GM12878 (cell line): ENCODE measurements at regions of chr6 and their contacts with region 1.

Region 1: DNA sequence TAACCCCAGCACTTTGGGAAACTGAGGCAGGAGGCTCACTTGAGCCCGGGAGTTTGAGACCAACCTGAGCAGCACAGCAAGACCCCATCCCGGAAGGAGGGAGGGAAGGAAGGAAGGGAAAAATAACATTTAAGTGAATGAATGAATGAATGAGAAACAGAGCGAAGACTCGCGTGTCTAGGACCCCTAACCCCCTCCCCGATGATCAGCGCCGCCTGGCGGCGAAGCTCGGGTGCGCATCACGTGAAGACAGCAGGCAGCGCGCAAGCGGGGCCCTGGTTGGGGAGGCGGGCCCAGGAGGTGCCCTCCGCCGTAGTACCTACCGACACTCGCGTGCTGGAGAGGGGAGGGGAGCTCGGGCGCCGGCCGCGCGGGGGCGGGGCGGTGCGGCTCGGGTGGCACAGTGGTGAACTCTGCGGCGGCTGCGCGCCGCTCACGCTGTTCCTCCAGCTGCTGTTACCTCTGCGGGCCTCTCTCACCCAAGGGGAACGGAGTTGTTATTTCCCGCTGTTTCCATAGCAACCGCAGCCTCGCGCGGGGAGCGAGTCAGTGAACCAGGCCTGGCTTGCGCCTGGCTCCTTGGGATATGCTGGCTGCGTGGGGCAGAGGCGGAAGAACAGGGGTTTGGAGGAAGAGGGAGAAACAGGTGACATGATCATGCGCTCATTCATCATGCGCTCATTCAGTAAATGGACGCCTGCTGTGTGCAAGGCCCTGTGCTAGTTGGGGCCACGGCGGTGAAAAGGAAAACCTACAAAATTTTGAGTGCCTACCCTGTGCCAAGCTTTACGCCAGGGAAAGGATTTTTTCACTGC is 2.0 kb upstream of the DCDC2 start:
- DNase-seq: peak; percentile 28
- ATAC-seq: peak; percentile 97
- H3K4me3 ChIP-seq: peak overlapping the region; percentile 17; the same call in 1 of the 2 replicates
- H3K27ac ChIP-seq: no peak overlapping the region
- H3K4me1 ChIP-seq: no peaks in the 10 kb centered on the region; the same call in 1 of the 2 replicates
- H3K27me3 ChIP-seq: peaks cover 0 to 2% of the 10 kb centered on the region in 2 experiments; a peak in 1 of 4 replicates
- CTCF ChIP-seq: peak; percentile 56 to 91 (median 85)
- EP300 ChIP-seq: no peak; a peak in 1 of 4 replicates
- POLR2A ChIP-seq: no peak
- RAD21 ChIP-seq: peak; percentile 49; the same call in 1 of the 2 replicates

Region 2: GRCh38 chr6:24009319-24009718 is 350.5 kb before region 1 on chr6:
- CTCF ChIA-PET with region 1: no interaction called
- POLR2A ChIA-PET with region 1: no interaction called
- RAD21 ChIA-PET with region 1: no interaction called
- SMC1A ChIA-PET with region 1: no interaction called
- in situ Hi-C with region 1: no loop called
- intact Hi-C with region 1: no loop called
- DNase-seq: no peak
- ATAC-seq: no peak
- H3K4me3 ChIP-seq: no peak overlapping the region
- H3K27ac ChIP-seq: no peak overlapping the region
- H3K4me1 ChIP-seq: no peaks in the 10 kb centered on the region
- H3K27me3 ChIP-seq: no peaks in the 10 kb centered on the region
- CTCF ChIP-seq: no peak
- EP300 ChIP-seq: no peak
- POLR2A ChIP-seq: no peak
- RAD21 ChIP-seq: no peak

Region 3: GRCh38 chr6:24069526-24069925 is 290.3 kb before region 1 on chr6:
- CTCF ChIA-PET with region 1: interaction called, 3 read pairs
- POLR2A ChIA-PET with region 1: no interaction called
- RAD21 ChIA-PET with region 1: no interaction called
- SMC1A ChIA-PET with region 1: no interaction called
- in situ Hi-C with region 1: no loop called
- intact Hi-C with region 1: loop called (anchors 5 kb)
- DNase-seq: no peak
- ATAC-seq: no peak
- H3K4me3 ChIP-seq: no peak overlapping the region
- H3K27ac ChIP-seq: no peak overlapping the region
- H3K4me1 ChIP-seq: no peaks in the 10 kb centered on the region
- H3K27me3 ChIP-seq: no peaks in the 10 kb centered on the region
- CTCF ChIP-seq: no peak
- EP300 ChIP-seq: no peak
- POLR2A ChIP-seq: no peak
- RAD21 ChIP-seq: no peak

Region 4: DNA sequence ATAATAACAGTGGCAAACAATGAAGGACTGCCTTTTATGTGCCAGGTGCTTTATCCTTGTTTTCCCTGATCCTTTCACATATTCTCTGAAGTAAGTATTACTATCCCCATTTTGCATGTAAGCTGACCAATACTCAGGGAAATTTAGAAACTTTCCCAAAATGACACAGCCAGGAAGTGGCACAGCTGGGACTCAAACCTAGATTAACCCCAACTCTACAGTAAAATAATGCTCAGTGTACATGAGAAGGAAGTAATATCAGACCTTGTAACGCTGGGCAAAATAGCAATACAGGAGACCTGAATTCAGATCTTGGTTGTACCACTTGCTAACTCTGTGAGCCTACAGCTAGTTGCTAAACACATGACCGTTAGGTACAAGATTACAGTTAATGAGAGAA is 260.7 kb before region 1 on chr6:
- CTCF ChIA-PET with region 1: no interaction called
- POLR2A ChIA-PET with region 1: no interaction called
- RAD21 ChIA-PET with region 1: no interaction called
- SMC1A ChIA-PET with region 1: no interaction called
- in situ Hi-C with region 1: no loop called
- intact Hi-C with region 1: no loop called
- DNase-seq: peak; percentile 7
- ATAC-seq: peak; percentile 48
- H3K4me3 ChIP-seq: no peak overlapping the region
- H3K27ac ChIP-seq: no peak overlapping the region
- H3K4me1 ChIP-seq: no peaks in the 10 kb centered on the region
- H3K27me3 ChIP-seq: no peaks in the 10 kb centered on the region
- CTCF ChIP-seq: no peak
- EP300 ChIP-seq: no peak
- POLR2A ChIP-seq: no peak
- RAD21 ChIP-seq: no peak